ENCODE measurements at regions of chr2 and their contacts with region 1.

Region 1: DNA sequence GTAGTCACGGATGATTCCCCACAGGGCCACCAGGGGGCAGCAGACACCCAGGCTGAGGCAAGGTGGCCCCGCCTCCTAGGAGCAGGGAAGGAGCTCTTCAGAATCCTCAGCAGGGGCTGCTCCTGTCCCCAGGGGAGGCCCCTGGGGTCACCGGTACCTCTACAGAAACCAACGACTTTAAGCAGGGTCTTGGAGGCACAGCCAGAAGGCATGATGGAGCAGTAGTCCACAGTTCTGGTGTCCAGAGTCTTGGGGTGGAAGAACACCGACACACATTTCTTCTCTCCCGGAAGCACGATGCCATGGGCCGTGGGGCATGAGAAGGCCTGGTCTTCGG is 11.5 kb downstream of the CFAP65 start:
- DNase-seq: peak; percentile 76 to 80
- ATAC-seq: peak; percentile 89 to 97; a peak in 5 of 6 replicates
- H3K4me3 ChIP-seq: no peak overlapping the region
- H3K27ac ChIP-seq: no peak overlapping the region
- H3K4me1 ChIP-seq: no peaks in the 10 kb centered on the region
- CTCF ChIP-seq: peak; percentile 88
- EP300 ChIP-seq: no peak
- POLR2A ChIP-seq: no peak
- RAD21 ChIP-seq: peak; percentile 82 to 87

Region 2: GRCh38 chr2:219002395-219003266 is 27.2 kb before region 1 on chr2:
- CTCF ChIA-PET with region 1: interaction called, 44 read pairs
- POLR2A ChIA-PET with region 1: no interaction called
- DNase-seq: peak; percentile 82 to 93
- ATAC-seq: peak; percentile 84 to 93
- H3K4me3 ChIP-seq: peak overlapping the region; percentile 59
- H3K27ac ChIP-seq: peak overlapping the region; percentile 64 to 83
- H3K4me1 ChIP-seq: peaks cover 7% of the 10 kb centered on the region
- CTCF ChIP-seq: peak; percentile 68
- EP300 ChIP-seq: no peak
- POLR2A ChIP-seq: peak; percentile 52
- RAD21 ChIP-seq: 0 out of 5 replicates have a peak, but pooled peaks have one; percentile 17 to 19

Region 3: DNA sequence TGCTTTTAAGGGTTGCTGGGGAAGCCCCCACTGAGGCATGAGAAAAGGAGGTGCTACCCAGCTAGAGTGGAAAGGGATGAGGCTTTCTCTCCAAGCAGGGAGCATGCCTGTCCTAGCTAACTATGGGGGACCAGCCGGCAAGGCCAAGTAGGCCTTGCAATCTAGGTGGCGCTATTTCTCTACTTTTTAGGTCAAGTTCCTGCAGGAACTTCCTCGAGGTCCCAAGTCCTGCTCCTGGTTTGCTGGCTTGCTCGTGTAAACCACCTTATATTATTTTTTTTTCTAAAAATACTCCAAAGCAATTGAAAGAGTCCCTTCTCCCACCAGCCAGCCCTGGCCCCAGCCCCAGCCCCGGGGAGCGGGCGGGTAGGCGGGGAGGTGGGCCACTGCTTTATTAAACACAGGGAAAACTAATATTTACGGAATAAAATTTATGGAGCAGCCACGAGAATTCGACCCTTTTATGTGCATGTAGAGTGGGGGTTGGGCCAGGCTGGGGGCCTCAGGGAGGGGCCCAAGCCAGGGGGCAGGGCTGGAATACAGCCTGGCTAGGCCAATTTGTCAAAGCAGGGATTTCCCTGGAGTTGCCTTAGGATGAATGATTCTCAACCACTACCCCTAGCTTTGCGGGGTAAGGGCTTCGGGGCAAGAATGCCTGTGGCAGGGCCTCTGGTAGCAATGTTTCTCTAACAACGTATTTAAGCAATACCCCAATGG is 43.8 kb after region 1 on chr2:
- CTCF ChIA-PET with region 1: interaction called, 15 read pairs
- POLR2A ChIA-PET with region 1: no interaction called
- DNase-seq: peak; percentile 26 to 73
- ATAC-seq: peak; percentile 68 to 92; a peak in 4 of 6 replicates
- H3K4me3 ChIP-seq: no peak overlapping the region
- H3K27ac ChIP-seq: no peak overlapping the region
- H3K4me1 ChIP-seq: no peaks in the 10 kb centered on the region
- CTCF ChIP-seq: peak; percentile 65
- EP300 ChIP-seq: no peak
- POLR2A ChIP-seq: no peak
- RAD21 ChIP-seq: peak; percentile 59 to 63

Region 4: GRCh38 chr2:219111375-219112061 is 81.7 kb after region 1 on chr2:
- CTCF ChIA-PET with region 1: interaction called, 111 read pairs
- POLR2A ChIA-PET with region 1: no interaction called
- DNase-seq: no peak
- ATAC-seq: no peak
- H3K4me3 ChIP-seq: no peak overlapping the region
- H3K27ac ChIP-seq: no peak overlapping the region
- H3K4me1 ChIP-seq: peaks cover 11% of the 10 kb centered on the region; the same call in 2 of the 3 replicates
- CTCF ChIP-seq: no peak
- EP300 ChIP-seq: no peak
- POLR2A ChIP-seq: no peak
- RAD21 ChIP-seq: no peak

Region 5: DNA sequence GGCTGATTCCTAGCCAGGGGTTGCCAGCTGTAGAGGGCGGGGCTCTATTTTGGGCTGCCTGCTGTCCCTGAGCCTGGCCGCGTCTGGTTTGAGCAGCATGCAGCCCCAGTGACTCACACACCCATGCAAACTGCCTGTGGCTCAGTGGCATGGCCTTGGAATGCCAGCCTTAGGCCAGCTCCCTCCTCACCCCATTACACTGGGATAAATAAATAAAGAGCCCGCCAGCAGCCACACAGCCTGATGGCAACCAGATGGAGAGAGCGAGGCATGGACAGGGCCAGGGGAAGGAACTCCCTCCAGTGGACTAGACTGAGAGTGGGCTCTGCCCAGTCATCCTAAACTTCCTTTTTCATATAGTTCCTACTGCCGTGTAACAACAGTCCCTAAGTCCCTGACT is 112.5 kb after region 1 on chr2:
- CTCF ChIA-PET with region 1: interaction called, 23 read pairs
- POLR2A ChIA-PET with region 1: no interaction called
- DNase-seq: no peak
- ATAC-seq: peak; percentile 68 to 70; a peak in 4 of 6 replicates
- H3K4me3 ChIP-seq: no peak overlapping the region
- H3K27ac ChIP-seq: no peak overlapping the region
- H3K4me1 ChIP-seq: peaks cover 5% of the 10 kb centered on the region; the same call in 1 of the 3 replicates
- CTCF ChIP-seq: no peak
- EP300 ChIP-seq: no peak
- POLR2A ChIP-seq: no peak
- RAD21 ChIP-seq: no peak

Measured in A549 (cell line).